GM13977 (cell line): ENCODE measurements at regions of chr1 and their contacts with region 1.

Region 1: GRCh38 chr1:245045087-245045881 is 109.5 kb upstream of the KIF26B start:
- DNase-seq: no peak
- CTCF ChIP-seq: no peak

Region 2: DNA sequence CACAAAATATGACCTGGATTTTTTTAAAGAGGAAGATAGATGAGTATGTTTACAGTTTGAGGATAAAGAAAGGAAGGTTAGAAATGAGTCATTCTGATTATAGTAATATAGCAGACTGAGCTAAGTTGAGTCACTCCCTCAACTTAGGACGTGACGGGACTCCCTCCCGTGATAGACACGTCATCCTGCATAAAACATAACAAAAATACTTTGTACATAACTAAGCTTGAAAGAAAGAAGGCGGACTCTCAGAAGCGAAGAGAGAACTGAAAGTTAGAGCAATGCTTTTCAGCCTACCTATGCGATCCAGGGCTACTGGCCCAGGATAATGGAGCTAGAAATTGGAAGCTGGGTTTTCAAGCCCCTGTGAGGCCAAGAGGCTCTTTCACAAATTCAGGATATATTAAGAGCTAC is 445.3 kb before region 1 on chr1:
- in situ Hi-C with region 1: loop called (anchors 10 kb)
- DNase-seq: peak; percentile 71
- CTCF ChIP-seq: no peak

Region 3: DNA sequence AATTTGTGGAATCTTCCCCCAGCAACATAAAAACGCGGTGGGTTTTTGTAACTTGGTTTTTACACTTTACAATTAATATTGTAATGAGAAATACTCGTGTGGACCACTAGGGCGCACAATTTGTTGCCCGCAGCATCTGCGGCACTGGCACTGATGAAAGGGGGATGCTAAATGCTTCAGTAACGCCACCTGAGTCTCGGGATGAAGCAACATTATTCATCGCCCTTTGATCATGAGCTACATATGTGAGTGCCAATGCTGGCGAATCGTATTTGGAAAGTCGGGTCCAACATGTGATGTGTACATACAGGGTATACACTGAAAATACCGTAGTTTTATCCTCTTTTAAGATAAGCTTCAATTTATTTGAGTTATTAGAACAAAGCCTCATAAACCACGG is 244.0 kb before region 1 on chr1:
- in situ Hi-C with region 1: loop called (anchors 10 kb)
- DNase-seq: peak; percentile 74
- CTCF ChIP-seq: peak; percentile 66

Region 4: DNA sequence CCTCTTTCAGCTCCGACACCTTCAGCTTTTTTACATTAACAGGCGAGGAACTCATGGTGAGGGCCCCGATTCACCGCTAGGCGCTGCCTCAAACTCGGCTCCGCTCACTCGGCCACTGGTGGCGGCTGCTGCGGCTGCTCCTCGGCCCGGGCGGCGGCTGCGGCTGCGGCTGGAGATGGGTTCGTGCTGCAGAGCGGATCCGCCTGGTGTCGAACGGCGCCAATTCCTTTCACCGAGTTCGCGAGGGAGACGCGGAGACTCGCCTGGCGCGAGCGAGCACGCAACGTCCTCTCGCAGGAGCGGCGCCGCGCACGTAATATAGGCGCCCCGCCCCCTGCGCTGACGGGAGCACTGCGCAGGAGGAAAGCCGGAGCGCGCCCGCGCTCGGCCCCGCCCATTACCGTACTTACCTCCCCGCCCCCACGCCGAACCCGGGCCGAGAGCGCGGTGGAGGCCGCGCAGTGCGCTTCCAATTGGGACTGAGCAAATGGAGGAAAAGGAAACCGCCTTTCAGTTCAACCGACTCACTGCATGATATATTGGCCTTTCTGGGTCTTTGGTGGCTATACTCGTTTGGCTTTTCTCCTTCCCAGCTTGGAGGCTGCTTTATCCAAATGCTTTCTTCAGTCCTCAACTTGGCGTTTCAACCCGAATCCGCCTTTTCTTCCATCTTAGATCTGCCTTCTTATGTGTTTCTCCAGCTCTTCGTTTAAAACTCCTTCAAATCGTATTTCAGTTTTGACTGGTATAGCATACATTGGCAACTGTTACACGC is 180.8 kb before region 1 on chr1 and contains the start of gene HNRNPU:
- in situ Hi-C with region 1: loop called (anchors 25 kb)
- DNase-seq: peak; percentile 94
- CTCF ChIP-seq: no peak

Region 5: DNA sequence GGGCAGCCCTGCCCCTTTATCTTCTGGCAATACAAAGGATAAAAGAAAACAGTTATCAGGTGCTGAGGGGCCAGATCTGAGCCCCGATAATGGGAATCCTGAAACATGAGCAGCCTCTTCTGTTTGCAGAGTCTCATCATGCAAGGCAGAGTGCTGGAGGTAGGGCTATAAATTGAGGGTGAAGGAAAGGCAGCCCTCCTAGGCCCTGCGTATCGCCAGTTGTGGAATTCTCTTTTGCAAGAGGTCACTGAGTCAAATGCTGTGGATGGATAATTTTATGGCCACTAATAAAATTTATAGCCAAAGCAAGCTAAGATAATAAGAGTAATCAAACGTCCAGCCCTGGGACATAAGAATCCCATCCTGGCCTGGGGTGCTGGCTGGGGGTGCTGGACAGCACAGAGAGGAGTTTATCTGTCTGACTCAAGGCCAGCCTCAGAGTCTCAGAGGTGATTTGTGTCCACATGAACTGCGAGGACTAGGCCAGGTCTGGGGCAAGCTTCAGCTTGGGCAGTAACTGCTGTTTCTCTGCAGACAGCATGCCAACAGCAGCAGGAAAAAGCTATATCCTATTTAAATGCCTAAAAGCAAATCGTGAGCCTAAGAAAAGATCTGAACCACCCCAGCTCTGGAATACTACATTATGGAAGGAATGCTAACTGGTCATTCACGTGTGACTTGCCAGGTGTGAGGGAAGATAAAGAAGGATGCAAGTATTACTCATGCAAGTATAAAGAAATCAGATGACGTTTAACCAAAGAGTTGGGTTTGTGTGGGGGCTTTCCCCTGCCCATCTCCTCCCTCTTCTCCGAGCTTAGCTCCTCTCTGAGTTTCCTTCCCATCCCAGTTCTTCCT is 364.3 kb after region 1 on chr1:
- in situ Hi-C with region 1: no loop called
- DNase-seq: no peak
- CTCF ChIP-seq: no peak

Region 6: GRCh38 chr1:246893191-246893939 is 1848.1 kb after region 1 on chr1:
- in situ Hi-C with region 1: no loop called
- DNase-seq: peak; percentile 22
- CTCF ChIP-seq: no peak